Endothelial cell of umbilical vein (primary cell): ENCODE measurements at regions of chr17 and their contacts with region 1.

Region 1: GRCh38 chr17:51298508-51299371 is 38.4 kb downstream of the UTP18 start:
- DNase-seq: peak; percentile 37
- H3K4me3 ChIP-seq: no peak overlapping the region
- H3K27ac ChIP-seq: no peak overlapping the region
- H3K4me1 ChIP-seq: no peaks in the 10 kb centered on the region
- H3K27me3 ChIP-seq: no peaks in the 10 kb centered on the region
- CTCF ChIP-seq: peak; percentile 51 to 63
- POLR2A ChIP-seq: no peak

Region 2: DNA sequence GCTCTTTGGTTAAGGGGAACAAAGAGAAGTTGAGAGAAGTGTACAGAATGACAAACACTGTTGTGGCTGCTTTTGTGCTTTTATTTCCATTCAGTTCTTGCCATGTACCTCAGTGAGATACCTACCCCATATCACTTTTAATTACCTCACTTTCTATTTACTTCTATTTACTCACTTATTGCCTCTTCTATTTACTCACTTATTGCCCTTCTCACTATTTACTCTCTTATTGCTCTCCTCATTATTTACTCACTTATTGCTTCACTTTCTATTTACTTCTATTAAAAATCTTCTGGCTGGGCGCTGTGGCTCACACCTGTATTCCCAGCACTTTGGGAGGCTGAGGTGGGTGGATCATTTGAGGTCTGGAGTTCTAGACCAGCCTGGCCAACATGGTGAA is 80.8 kb before region 1 on chr17:
- CTCF ChIA-PET with region 1: no interaction called
- POLR2A ChIA-PET with region 1: no interaction called
- dilution Hi-C with region 1: no loop called
- intact Hi-C with region 1: no loop called
- DNase-seq: no peak
- H3K4me3 ChIP-seq: no peak overlapping the region
- H3K27ac ChIP-seq: no peak overlapping the region
- H3K4me1 ChIP-seq: peaks cover 17% of the 10 kb centered on the region
- H3K27me3 ChIP-seq: no peaks in the 10 kb centered on the region
- CTCF ChIP-seq: no peak
- POLR2A ChIP-seq: no peak

Region 3: DNA sequence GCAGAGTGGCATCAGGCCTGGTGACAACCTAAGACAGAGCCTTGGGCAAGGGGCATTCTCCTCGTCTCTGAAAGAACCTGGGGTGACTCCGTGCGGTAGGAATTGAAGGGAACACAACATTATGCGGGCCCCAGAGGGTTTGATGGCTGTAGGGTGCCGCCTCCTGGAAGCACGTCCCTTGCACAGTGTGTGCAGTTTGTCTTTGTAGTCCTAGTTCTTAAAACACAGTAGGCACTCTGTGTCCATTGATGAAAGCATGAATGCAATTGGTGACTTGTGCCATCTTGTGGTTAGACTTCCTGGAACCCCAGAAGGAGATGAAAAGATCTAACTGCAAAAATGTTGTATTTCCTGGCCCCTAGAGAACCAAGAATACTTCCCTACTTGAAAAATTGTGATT is 241.4 kb after region 1 on chr17:
- CTCF ChIA-PET with region 1: interaction called, 49 read pairs
- POLR2A ChIA-PET with region 1: no interaction called
- dilution Hi-C with region 1: no loop called
- intact Hi-C with region 1: loop called (anchors 1 kb)
- DNase-seq: no peak
- H3K4me3 ChIP-seq: no peak overlapping the region
- H3K27ac ChIP-seq: no peak overlapping the region
- H3K4me1 ChIP-seq: no peaks in the 10 kb centered on the region
- H3K27me3 ChIP-seq: no peaks in the 10 kb centered on the region
- CTCF ChIP-seq: no peak
- POLR2A ChIP-seq: no peak

Region 4: DNA sequence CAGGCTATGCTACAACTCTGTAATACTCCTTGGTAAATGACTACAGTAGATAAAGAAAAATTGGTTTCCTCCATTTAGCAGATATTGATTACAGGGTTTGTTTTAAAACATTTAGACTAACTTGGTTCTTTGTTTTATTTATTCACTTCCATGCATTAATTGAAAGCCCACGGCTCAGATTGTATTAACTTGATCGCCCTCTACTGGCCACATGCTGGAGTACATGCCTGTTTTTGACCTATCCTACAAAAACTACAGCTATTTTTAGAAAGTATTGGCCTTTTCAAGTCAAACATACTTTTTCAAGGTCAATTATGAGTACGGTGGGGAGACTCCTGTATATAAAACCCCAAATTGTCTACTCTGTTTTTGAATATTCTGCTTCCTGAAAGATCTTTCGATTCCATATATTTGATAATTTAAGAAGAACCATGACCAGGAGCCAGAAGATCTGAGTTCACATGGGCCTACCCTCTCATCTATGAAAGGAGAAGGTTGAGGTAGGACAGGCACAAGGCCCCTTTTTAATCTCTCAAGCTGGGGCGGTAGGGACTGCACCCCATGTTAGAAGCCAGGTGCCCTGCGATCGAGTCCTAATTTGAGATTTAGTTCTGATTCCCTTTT is 808.0 kb after region 1 on chr17:
- CTCF ChIA-PET with region 1: interaction called, 12 read pairs
- POLR2A ChIA-PET with region 1: no interaction called
- dilution Hi-C with region 1: no loop called
- intact Hi-C with region 1: loop called (anchors 2 kb)
- DNase-seq: peak; percentile 15
- H3K4me3 ChIP-seq: no peak overlapping the region
- H3K27ac ChIP-seq: no peak overlapping the region
- H3K4me1 ChIP-seq: no peaks in the 10 kb centered on the region
- H3K27me3 ChIP-seq: no peaks in the 10 kb centered on the region
- CTCF ChIP-seq: peak; percentile 54 to 62
- POLR2A ChIP-seq: no peak